Left cardiac atrium (tissue), 4 donors: ENCODE measurements at regions of chr18 and their contacts with region 1.

Region 1: DNA sequence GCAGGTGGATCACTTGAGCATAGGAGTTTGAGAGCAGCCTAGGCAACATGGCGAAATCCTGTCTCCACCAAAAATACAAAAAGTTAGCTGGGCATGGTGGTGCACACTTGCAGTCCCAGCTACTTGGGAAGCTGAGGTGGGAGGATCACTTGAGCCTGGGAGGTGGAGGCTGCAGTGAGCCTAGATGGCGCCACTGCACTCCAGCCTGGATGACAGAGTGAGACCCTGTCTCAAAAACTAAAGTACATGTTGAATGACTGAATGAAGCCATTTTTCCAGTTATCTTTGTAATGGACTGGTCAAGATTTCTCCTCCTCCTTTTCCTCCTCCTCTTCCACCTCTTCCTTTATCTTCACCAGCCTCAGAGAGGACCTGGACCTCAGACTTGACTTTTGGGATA is 272.0 kb downstream of the SMAD2 start:
- DNase-seq: no peak
- ATAC-seq: no peak

Region 2: GRCh38 chr18:47601581-47602272 is 56.8 kb before region 1 on chr18:
- intact Hi-C with region 1: loop called in 1 of 2 experiments (anchors 10 kb)
- DNase-seq: no peak
- ATAC-seq: no peak

Region 3: GRCh38 chr18:47717257-47717656 is 58.8 kb after region 1 on chr18:
- intact Hi-C with region 1: no loop called
- DNase-seq: no peak
- ATAC-seq: no peak